ENCODE measurements at regions of chr7 and their contacts with region 1.

Region 1: DNA sequence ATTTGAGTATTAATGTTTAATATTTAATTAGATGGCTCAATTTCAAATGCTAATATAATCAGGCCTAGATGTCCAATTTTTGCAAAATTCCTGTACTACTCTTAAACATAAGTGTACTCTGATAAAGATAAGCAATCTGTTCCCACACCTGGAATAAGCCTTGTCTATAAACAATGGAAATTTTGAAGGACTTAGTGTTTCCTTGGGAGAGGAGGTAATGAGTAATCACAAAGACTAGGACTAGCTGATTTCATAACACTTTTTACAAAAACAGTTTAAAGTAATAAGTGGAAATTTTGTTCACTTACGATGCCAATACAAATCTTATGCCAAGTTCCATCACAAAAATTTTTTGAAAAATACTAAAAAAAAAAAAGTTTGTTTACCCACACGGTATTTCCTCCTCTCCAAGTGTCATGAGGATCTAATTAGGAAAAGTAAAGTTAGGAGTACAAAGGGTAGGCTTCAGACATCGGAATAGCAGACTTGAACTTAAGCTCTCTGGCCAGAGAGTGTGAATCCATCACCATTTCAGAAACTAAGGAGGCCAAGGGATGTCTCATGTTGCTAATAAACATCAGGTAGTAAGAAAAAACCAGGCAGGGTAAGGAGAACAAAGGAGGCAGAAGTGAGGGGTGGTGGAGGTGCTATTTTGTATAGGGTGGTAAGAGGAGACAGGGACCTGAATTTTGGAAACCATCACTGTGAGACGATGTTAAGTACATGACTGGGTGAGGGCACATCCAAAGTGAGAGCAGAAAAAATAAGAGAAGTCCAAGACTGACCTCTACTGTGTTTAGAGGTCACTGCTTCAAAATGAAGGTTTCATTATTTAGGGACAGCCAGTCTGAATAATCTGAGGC is 61.3 kb downstream of the RAPGEF5 start:
- DNase-seq: no peak

Region 2: DNA sequence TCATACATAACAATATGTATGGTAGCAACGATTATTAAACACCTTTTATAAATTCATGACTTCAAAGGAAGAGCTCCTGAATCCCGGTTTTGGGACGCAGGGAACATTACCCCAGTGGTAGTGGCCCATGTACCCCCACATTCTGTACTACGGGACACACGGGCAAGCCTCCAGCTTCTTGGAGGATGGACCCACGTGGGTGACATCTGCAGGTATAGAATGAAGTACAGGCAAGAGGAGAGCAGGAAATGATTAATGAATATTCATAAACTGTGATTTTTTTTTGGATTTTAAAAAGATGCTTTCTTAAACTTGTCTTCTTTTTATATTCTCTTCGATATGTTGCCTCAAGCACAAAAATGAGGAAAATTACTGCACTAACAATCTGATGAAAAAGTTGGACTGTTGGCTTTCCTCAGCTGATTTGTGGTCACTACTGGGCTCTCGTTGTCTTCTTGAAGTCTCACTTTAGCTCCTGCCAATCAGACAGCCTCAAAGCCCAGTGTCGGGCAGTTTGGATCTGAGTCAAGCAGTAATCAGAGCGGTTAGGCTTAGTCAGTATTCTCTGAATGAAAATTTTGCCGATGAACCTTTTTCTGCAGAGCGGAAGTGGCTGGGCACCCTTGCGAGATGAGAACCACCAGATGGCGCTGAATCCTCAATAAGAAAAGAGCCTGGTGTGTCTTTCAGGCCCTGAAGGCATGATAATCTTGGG is 192.2 kb before region 1 on chr7:
- intact Hi-C with region 1: loop called (anchors 2 kb)
- DNase-seq: peak; percentile 53 to 95 (median 74)

Region 3: GRCh38 chr7:22110227-22110839 is 185.3 kb before region 1 on chr7:
- intact Hi-C with region 1: loop called (anchors 2 kb)
- DNase-seq: peak in 8 of 10 donors; percentile 61 to 95 (median 81)

Region 4: GRCh38 chr7:22166928-22167327 is 128.7 kb before region 1 on chr7:
- intact Hi-C with region 1: no loop called
- DNase-seq: no peak

Region 5: GRCh38 chr7:22377703-22378102 is 82.1 kb after region 1 on chr7:
- intact Hi-C with region 1: no loop called
- DNase-seq: peak in 2 of 10 donors; percentile 33 to 43

Region 6: DNA sequence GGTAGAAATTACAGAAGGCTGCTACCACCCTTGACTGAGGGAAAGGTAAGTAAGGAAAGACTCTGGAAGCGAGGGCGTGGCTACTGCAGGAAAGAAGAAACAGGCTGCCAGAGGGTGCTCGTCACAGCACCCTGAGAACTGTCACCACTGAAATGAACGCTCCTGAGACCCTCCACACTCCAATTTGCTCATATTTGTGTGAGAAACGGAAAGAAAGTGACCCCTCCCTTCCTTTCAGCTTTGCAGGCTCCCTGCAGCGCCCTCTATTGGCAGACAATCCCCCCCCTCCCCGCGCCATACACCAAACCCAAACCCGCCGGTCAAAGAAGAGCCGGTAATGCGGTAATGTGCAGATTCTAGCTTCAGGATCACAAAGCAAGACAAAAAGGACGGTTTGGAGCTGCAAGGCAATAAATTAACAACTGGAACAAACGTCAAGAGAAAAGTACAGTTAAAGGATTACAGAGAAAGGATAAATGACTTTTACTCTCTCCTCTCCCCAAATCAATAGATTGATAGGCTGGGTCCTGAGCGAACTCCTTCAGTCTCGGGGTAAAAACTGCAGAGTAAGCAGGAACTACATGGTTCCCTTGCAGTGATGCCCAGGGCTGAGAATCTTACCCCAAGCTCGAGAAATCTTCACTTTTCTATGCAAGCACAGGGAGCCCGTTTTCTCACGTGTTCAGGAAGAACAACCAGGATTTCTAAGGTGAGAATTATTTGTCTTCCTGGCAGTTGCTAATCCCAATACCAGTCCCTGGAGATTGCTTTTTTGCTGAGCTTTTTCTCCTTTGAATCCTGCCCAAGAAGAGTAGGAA is 156.7 kb after region 1 on chr7:
- intact Hi-C with region 1: loop called (anchors 10 kb)
- DNase-seq: peak; percentile 52 to 95 (median 76)

Region 7: DNA sequence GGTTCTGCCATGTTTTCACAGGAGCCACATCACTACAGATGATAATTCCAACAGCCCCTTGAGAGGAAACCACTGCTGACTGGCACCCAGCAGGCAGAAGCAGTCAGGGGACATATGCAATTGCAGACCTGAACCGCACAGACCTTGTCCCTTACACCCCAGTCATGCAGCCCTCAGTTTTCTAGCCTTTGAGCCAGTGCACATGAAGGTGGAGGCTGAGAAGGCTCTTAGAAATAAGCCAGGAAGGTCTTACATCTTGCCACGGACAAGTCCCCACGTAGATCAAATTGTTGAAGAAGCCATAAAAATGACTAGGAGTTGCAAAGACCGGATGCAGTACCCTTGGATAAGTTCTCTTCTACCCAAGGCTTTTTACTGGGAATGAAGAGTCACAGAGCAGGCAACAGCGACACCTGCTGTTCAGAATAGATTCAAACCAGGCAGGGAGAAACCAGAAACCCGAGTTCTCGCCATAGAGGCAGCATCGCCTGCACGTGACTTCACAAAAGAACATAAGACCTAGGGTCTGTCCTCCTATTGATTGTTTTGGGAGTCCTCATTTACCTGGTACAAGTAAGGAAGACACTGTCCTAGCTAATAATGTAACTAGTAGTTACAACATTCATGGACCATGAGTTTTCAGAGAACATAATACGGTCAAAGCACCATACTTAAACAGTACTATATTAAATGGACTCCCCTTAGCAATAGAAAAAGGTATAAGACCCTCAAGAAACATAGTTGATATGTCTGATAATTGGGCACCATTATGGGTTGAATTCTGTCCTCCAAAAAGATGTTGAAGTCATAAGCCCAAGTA is 193.2 kb after region 1 on chr7:
- intact Hi-C with region 1: loop called (anchors 5 kb)
- DNase-seq: peak; percentile 44 to 95 (median 82)

Measured in posterior cingulate gyrus (tissue), 11 donors.